Heart left ventricle (tissue), 16 donors: ENCODE measurements at regions of chr7 and their contacts with region 1.

Region 1: GRCh38 chr7:13179102-13179501 is 491.7 kb downstream of the ARL4A start:
- DNase-seq: no peak
- ATAC-seq: peak in 3 of 4 donors; percentile 45 to 66 (median 57)
- H3K4me3 ChIP-seq: no peak overlapping the region
- H3K27ac ChIP-seq: no peak overlapping the region
- H3K4me1 ChIP-seq: peaks cover 0 to 9% (median 0%) of the 10 kb centered on the region in 12 donors
- H3K27me3 ChIP-seq: no peaks in the 10 kb centered on the region
- CTCF ChIP-seq: peak in 9 of 12 donors; percentile 9 to 52 (median 39)
- POLR2A ChIP-seq: no peak

Region 2: GRCh38 chr7:12674849-12675248 is 504.3 kb before region 1 on chr7:
- intact Hi-C with region 1: loop called in 3 of 10 experiments (anchors 2 to 10 kb)
- DNase-seq: no peak
- ATAC-seq: peak in 2 of 4 donors; percentile 36 to 41
- H3K4me3 ChIP-seq: no peak overlapping the region
- H3K27ac ChIP-seq: no peak overlapping the region
- H3K4me1 ChIP-seq: peaks cover 0 to 17% (median 0%) of the 10 kb centered on the region in 12 donors
- H3K27me3 ChIP-seq: no peaks in the 10 kb centered on the region
- CTCF ChIP-seq: peak in 10 of 12 donors; percentile 14 to 50 (median 34)
- POLR2A ChIP-seq: no peak

Region 3: GRCh38 chr7:13126347-13126746 is 52.8 kb before region 1 on chr7:
- intact Hi-C with region 1: loop called in 1 of 10 experiments (anchors 10 kb)
- DNase-seq: no peak
- ATAC-seq: no peak
- H3K4me3 ChIP-seq: no peak overlapping the region
- H3K27ac ChIP-seq: no peak overlapping the region
- H3K4me1 ChIP-seq: no peaks in the 10 kb centered on the region
- H3K27me3 ChIP-seq: no peaks in the 10 kb centered on the region
- CTCF ChIP-seq: no peak
- POLR2A ChIP-seq: no peak